OCI-LY7 (cell line): ENCODE measurements at regions of chr1 and their contacts with region 1.

Region 1: GRCh38 chr1:32072622-32073298 is at the start of gene TMEM39B:
- DNase-seq: peak; percentile 98
- H3K4me3 ChIP-seq: peak within 1 kb of the TSS; percentile 77
- H3K27ac ChIP-seq: peak within 1 kb of the TSS; percentile 81
- H3K4me1 ChIP-seq: peaks cover 22% of the 10 kb centered on the region
- CTCF ChIP-seq: no peak
- total RNA-seq, gene TMEM39B: 10.0 and 11.3 TPM in 2 replicates

Region 2: GRCh38 chr1:31944205-31945089 is 128.3 kb before region 1 on chr1:
- CTCF ChIA-PET with region 1: no interaction called
- POLR2A ChIA-PET with region 1: interaction called, 11 read pairs
- intact Hi-C with region 1: no loop called
- DNase-seq: peak; percentile 90
- H3K4me3 ChIP-seq: peak overlapping the region; percentile 65
- H3K27ac ChIP-seq: peak overlapping the region; percentile 68
- H3K4me1 ChIP-seq: peaks cover 56% of the 10 kb centered on the region
- CTCF ChIP-seq: no peak

Region 3: DNA sequence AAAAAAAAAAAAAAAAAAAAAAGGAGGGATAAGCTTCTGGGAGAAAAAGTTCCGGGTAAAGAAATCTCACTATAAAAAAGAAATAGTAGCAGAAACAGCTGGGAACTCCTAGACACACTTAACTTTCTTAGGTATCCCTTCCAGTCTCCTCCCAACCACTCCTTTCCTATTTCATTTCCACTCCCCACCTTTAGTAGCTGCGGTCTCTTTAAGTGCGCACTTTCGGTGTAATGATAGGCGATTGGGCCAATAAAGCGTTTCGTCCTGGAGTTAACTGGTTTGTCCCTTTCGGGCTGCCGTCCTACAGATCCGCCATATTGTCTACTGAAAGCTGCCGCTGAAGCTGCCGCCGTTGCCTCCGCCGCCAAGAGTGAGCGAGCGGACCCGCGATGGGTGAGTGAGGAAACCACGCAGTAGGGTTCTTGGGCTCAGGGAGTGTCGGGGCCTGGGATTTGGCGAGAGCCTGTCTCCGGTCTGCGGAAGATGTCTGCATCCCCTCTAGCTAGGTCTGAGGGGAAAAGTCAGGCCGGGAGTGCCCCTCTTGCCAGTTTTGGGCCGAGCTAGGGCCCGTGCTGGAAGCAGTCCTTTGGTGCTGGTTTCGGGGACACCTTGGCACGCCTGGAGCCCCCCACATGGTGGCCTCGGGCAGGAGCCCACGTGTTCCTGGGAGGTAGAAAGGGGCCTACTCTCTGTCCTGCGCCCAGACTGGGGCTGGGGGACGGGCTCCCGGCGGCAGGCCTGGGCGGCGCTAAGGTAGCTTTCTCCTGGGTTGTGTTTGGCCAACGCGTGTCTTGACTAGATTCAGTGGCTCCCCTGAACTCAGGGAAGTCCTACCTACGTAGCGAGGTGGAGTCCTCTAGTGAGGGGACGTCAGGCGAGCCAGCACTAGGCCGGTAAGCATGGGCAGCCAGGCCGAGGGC is 35.2 kb after region 1 on chr1 and contains the start of gene KPNA6:
- CTCF ChIA-PET with region 1: interaction called, 6 read pairs
- POLR2A ChIA-PET with region 1: interaction called, 27 read pairs
- intact Hi-C with region 1: loop called (anchors 1 kb)
- DNase-seq: peak; percentile 96
- H3K4me3 ChIP-seq: peak within 1 kb of the TSS; percentile 97
- H3K27ac ChIP-seq: peak within 1 kb of the TSS; percentile 81
- H3K4me1 ChIP-seq: peaks cover 29% of the 10 kb centered on the region
- CTCF ChIP-seq: no peak
- total RNA-seq, gene KPNA6: 16.6 and 19.5 TPM in 2 replicates

Region 4: GRCh38 chr1:32179443-32180185 is 106.9 kb after region 1 on chr1 and contains the start of gene TXLNA:
- CTCF ChIA-PET with region 1: no interaction called
- POLR2A ChIA-PET with region 1: interaction called, 3 read pairs
- intact Hi-C with region 1: loop called (anchors 2 kb)
- DNase-seq: peak; percentile 92
- H3K4me3 ChIP-seq: peak within 1 kb of the TSS; percentile 78
- H3K27ac ChIP-seq: peak within 1 kb of the TSS; percentile 65
- H3K4me1 ChIP-seq: peaks cover 33% of the 10 kb centered on the region
- CTCF ChIP-seq: no peak
- total RNA-seq, gene TXLNA: 42.0 and 47.5 TPM in 2 replicates

Region 5: DNA sequence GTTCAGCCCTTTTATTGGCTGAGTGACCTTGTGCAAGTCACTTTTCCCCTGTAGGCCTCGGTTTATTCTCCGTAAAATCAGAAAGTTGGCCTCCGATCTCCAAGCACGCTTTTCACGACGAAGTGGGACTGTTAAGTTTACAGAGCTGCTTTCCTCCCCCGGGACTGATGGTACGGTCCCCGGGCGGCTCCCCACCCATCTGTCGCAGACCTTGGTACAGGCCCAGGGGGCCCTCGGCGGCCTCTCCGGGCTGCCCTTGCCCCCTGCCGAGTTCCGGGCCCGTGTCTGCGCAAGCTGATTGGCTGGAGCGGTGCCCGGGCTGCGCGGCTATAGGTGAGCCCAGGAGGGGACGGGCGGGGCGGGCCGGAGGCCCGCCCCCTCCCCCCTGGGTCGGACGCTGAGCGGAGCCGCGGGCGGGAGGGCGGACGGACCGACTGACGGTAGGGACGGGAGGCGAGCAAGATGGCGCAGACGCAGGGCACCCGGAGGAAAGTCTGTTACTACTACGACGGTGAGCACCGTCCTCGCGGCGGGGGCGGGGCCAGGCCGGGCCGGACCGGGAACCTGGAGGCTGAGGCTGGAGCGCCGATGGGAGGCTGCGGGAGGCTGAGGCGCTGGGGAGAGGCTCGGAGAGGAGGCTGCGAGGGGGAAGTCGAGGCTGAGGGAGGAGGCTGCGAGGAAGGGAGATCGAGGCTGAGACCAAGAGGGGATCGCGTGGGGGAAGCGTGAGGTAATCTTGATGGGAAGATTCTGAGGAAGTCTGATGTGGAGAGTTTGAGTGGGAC is 219.1 kb after region 1 on chr1 and contains the start of gene HDAC1:
- CTCF ChIA-PET with region 1: no interaction called
- POLR2A ChIA-PET with region 1: interaction called, 6 read pairs
- intact Hi-C with region 1: loop called (anchors 5 kb)
- DNase-seq: peak; percentile 99
- H3K4me3 ChIP-seq: peak within 1 kb of the TSS; percentile 91
- H3K27ac ChIP-seq: peak within 1 kb of the TSS; percentile 78
- H3K4me1 ChIP-seq: peaks cover 58% of the 10 kb centered on the region
- CTCF ChIP-seq: no peak
- total RNA-seq, gene HDAC1: 259 and 270 TPM in 2 replicates

Region 6: GRCh38 chr1:32377541-32378220 is 304.9 kb after region 1 on chr1:
- CTCF ChIA-PET with region 1: no interaction called
- POLR2A ChIA-PET with region 1: interaction called, 10 read pairs
- intact Hi-C with region 1: no loop called
- DNase-seq: no peak
- H3K4me3 ChIP-seq: no peak overlapping the region
- H3K27ac ChIP-seq: no peak overlapping the region
- H3K4me1 ChIP-seq: no peaks in the 10 kb centered on the region
- CTCF ChIP-seq: no peak

Region 7: GRCh38 chr1:32817159-32817814 is 744.5 kb after region 1 on chr1 and contains the starts of genes S100PBP and YARS1:
- CTCF ChIA-PET with region 1: no interaction called
- POLR2A ChIA-PET with region 1: no interaction called
- intact Hi-C with region 1: loop called (anchors 1 kb)
- DNase-seq: peak; percentile 99
- H3K4me3 ChIP-seq: peak within 1 kb of the TSS; percentile 100
- H3K27ac ChIP-seq: peak within 1 kb of the TSS; percentile 99
- H3K4me1 ChIP-seq: peaks cover 62% of the 10 kb centered on the region
- CTCF ChIP-seq: no peak
- total RNA-seq, gene S100PBP: 72.1 and 91.8 TPM in 2 replicates
- total RNA-seq, gene YARS1: 276 and 282 TPM in 2 replicates